Left ventricle myocardium inferior (tissue), 1 donor: ENCODE measurements at regions of chr19 and their contacts with region 1.

Region 1: DNA sequence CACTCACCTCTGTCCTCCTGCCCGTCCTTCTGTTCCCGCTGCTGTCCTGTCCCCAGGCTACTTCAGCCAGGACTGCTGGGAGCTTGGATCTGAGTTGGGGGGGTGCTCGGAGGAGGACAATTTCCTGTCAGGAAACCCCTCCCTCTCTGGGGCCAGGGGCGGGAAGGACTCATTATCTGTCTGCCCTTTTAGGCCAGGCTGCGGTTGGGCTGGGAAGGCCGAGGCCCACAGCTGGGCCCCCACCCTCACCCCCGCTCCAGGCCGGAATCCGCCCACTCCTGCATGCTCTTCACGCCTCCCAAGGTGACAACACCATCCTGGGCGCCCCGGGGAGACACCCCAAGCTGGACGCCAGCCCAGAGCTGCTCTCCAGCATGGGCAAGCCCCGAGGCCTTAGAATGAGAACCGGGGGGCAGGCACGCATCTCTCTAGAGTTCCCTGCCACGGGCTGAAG is at the start of gene EXOC3L2:
- DNase-seq: peak; percentile 42
- H3K4me3 ChIP-seq: peak within 1 kb of the TSS; percentile 50
- H3K27ac ChIP-seq: peak within 1 kb of the TSS; percentile 73
- H3K4me1 ChIP-seq: peaks cover 41% of the 10 kb centered on the region
- H3K27me3 ChIP-seq: no peaks in the 10 kb centered on the region
- CTCF ChIP-seq: no peak
- total RNA-seq, gene EXOC3L2: 1.8 TPM

Region 2: GRCh38 chr19:45200568-45200994 is 44.8 kb before region 1 on chr19:
- intact Hi-C with region 1: loop called (anchors 5 kb)
- DNase-seq: no peak
- H3K4me3 ChIP-seq: no peak overlapping the region
- H3K27ac ChIP-seq: no peak overlapping the region
- H3K4me1 ChIP-seq: no peaks in the 10 kb centered on the region
- H3K27me3 ChIP-seq: no peaks in the 10 kb centered on the region
- CTCF ChIP-seq: peak; percentile 63